WTC11 (cell line): ENCODE measurements at regions of chr3 and their contacts with region 1.

Region 1: GRCh38 chr3:100590114-100590839 is 19.1 kb upstream of the ADGRG7 start:
- DNase-seq: peak; percentile 49
- ATAC-seq: peak; percentile 88
- H3K4me3 Mint-ChIP-seq: peak overlapping the region; percentile 54
- H3K27ac Mint-ChIP-seq: no peak overlapping the region
- H3K4me1 Mint-ChIP-seq: peaks cover 6% of the 10 kb centered on the region
- H3K27me3 Mint-ChIP-seq: no peaks in the 10 kb centered on the region
- CTCF ChIP-seq: peak; percentile 87

Region 2: GRCh38 chr3:100506355-100506754 is 83.9 kb before region 1 on chr3:
- CTCF ChIA-PET with region 1: no interaction called
- POLR2A ChIA-PET with region 1: no interaction called
- DNase-seq: no peak
- ATAC-seq: no peak
- H3K4me3 Mint-ChIP-seq: no peak overlapping the region
- H3K27ac Mint-ChIP-seq: no peak overlapping the region
- H3K4me1 Mint-ChIP-seq: no peaks in the 10 kb centered on the region
- H3K27me3 Mint-ChIP-seq: peaks cover 6% of the 10 kb centered on the region; the same call in 1 of the 2 replicates
- CTCF ChIP-seq: no peak

Region 3: DNA sequence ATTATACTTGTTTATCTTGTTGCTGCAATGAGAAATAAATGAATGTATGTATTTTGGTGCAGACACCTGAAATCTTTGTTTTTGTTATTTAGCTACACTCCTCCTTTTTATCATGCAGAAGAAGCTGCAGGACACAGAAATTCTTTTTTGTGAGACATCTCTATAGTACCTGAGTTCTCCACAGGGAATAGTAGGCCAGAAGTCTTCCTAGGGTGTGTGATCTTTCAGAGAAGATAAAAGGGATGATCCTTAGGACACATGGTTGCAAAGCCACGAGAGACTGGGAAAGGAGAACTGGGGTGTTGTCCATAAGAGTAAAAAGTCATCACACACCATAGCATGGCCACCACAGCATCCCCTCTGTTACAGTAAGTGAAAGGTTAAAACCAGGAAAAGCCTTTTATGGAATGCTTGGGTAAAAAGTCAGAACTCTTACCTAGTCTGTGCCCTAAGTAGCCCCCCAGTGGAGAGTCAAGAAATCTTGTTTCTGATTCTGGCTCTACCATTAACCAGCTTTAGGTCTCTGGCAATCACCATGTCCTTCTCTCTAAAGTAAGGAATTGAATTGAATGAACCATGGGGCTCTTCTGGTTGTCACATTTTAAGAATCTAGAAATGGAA is 12.8 kb before region 1 on chr3:
- CTCF ChIA-PET with region 1: interaction called, 11 read pairs
- POLR2A ChIA-PET with region 1: no interaction called
- DNase-seq: no peak
- ATAC-seq: peak; percentile 78
- H3K4me3 Mint-ChIP-seq: no peak overlapping the region
- H3K27ac Mint-ChIP-seq: peak overlapping the region; percentile 34; the same call in 1 of the 2 replicates
- H3K4me1 Mint-ChIP-seq: peaks cover 14% of the 10 kb centered on the region
- H3K27me3 Mint-ChIP-seq: no peaks in the 10 kb centered on the region; the same call in 1 of the 2 replicates
- CTCF ChIP-seq: no peak